Activated CD4-positive, alpha-beta T cell treated with anti-CD3 and anti-CD28 coated beads, Interleukin-2, amount 10 ng/mL, durations not matched to agents 7 days and 5 days (primary cell): ENCODE measurements at regions of chr5 and their contacts with region 1.

Region 1: DNA sequence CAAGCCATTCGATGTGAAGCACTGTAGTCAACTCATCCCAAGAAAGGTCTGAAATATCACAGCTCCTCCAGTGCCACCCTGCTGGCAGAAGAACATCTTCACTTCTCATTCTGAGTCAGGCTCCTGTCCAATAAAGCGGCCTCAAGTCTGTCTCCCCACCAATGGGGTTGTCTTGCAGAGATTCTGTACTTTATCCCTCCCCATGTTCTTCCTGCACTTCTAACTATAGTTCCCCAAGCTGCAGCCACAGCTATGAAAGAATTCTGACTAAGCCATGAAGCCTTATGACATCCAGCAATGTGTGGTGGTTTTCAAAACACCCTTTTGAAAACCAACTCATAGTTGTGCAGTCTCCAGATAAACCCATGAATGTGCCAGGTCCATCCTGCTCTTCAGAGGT is 6.8 kb downstream of the MACROH2A1 start:
- DNase-seq: no peak
- H3K4me3 Mint-ChIP-seq: no peak overlapping the region
- H3K27ac Mint-ChIP-seq: peak overlapping the region; percentile 70
- H3K4me1 Mint-ChIP-seq: peaks cover 80% of the 10 kb centered on the region
- H3K27me3 Mint-ChIP-seq: no peaks in the 10 kb centered on the region

Region 2: GRCh38 chr5:135310328-135310989 is 81.8 kb before region 1 on chr5:
- CTCF ChIA-PET with region 1: no interaction called
- POLR2A ChIA-PET with region 1: no interaction called
- DNase-seq: no peak
- H3K4me3 Mint-ChIP-seq: peak overlapping the region; percentile 18
- H3K27ac Mint-ChIP-seq: peak overlapping the region; percentile 87
- H3K4me1 Mint-ChIP-seq: peaks cover 76% of the 10 kb centered on the region
- H3K27me3 Mint-ChIP-seq: no peaks in the 10 kb centered on the region

Region 3: DNA sequence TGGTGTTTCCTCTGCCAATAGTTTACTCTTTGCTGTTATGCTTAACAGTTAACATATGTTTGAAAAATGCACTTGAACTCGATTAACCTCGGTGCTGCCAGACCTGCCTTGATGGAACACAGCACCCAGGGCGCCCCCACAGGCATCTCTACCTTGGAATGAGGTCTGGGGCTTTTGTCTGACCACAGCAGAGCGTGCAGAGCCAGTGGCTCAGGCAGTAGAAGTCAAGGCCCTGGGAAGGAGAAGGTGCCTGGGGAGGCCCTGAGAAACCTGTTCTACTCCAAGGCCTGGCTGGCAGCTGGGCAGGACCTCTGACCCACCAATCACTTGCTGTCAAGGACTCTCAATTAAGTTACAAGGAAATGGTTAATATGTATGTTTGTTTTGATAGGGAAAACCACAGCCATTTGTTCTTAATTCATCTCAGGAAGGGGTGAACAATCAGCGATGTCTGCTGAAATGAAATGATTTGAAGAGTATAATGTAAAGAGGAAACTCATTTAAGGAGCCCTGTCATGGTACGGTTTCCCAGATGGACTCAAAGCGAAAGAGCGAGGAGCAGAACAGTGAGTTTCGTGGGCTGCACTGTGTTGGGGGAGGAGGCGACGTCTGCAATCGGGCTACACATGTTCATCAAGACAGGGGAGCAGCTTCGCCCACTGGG is 15.2 kb before region 1 on chr5:
- CTCF ChIA-PET with region 1: interaction called, 12 read pairs
- POLR2A ChIA-PET with region 1: no interaction called
- DNase-seq: no peak
- H3K4me3 Mint-ChIP-seq: no peak overlapping the region
- H3K27ac Mint-ChIP-seq: peak overlapping the region; percentile 37
- H3K4me1 Mint-ChIP-seq: peaks cover 85% of the 10 kb centered on the region
- H3K27me3 Mint-ChIP-seq: no peaks in the 10 kb centered on the region

Region 4: GRCh38 chr5:135437796-135438560 is 45.7 kb after region 1 on chr5:
- CTCF ChIA-PET with region 1: no interaction called
- POLR2A ChIA-PET with region 1: no interaction called
- DNase-seq: no peak
- H3K4me3 Mint-ChIP-seq: no peak overlapping the region
- H3K27ac Mint-ChIP-seq: no peak overlapping the region
- H3K4me1 Mint-ChIP-seq: no peaks in the 10 kb centered on the region
- H3K27me3 Mint-ChIP-seq: peaks cover 6% of the 10 kb centered on the region

Region 5: DNA sequence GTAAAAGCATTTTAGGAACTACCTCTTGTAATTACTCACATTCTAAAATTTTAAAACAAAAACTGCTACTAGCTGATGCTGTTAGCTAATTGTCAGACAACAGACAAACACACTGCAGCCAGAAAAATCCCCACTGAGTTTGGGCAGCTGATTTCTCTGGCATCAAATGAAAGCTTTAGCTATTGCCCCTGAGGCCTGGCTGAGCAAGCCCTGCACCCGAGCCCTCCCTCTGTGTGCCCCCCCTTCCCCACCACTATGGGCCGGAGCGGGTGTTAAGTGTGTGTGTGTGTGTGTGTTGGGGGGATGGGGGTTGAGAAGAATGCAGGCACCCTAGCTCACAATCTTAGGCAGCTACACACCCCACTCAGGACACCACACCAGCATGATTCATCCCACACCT is 141.1 kb after region 1 on chr5:
- CTCF ChIA-PET with region 1: no interaction called
- POLR2A ChIA-PET with region 1: no interaction called
- DNase-seq: no peak
- H3K4me3 Mint-ChIP-seq: no peak overlapping the region
- H3K27ac Mint-ChIP-seq: no peak overlapping the region
- H3K4me1 Mint-ChIP-seq: peaks cover 3% of the 10 kb centered on the region
- H3K27me3 Mint-ChIP-seq: peaks cover 78% of the 10 kb centered on the region

Region 6: DNA sequence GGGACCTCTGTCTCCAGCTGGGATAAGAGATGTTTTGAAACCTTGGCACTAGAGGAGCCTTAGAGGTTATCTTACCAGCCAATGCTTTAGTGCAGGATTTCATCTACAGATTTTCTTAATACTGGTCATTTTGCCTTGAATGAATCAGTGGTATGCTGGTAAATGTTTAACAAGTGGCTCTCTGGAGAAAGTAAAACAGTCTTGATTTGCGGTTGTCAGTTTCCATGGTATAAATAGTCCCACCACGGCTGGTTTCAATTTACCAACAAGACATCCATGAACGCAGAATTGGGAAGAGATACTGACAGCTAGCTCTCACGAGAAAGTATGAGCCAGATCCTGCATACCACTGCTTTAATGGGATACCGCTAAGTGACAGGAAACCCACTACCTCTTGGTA is 243.2 kb after region 1 on chr5:
- CTCF ChIA-PET with region 1: no interaction called
- POLR2A ChIA-PET with region 1: no interaction called
- DNase-seq: no peak
- H3K4me3 Mint-ChIP-seq: no peak overlapping the region
- H3K27ac Mint-ChIP-seq: no peak overlapping the region
- H3K4me1 Mint-ChIP-seq: no peaks in the 10 kb centered on the region
- H3K27me3 Mint-ChIP-seq: peaks cover 19% of the 10 kb centered on the region